Calu3 (cell line): ENCODE measurements at regions of chrX and their contacts with region 1.

Region 1: DNA sequence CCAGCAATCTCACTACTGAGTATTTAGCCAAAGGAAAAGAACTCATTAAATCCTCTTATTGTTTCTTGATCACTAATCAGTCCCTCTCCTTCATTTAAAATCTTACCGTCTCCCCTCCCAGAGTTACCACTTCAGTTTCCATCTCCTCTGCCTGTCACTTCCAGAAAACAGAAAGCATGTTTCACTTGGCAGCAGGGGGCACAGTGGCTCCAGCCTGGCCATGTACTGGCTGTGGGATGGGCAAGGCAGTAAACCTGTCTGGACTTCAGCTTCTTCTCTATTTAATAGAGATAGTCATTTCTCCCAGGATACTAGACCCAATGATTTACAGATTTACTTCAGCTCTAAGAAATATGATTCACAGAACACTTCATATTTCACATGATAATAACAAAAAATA is 63.2 kb downstream of the CD40LG start:
- DNase-seq: peak; percentile 45
- H3K4me3 Mint-ChIP-seq: no peak overlapping the region
- H3K27ac Mint-ChIP-seq: no peak overlapping the region
- H3K4me1 Mint-ChIP-seq: no peaks in the 10 kb centered on the region
- H3K27me3 Mint-ChIP-seq: peaks cover 1% of the 10 kb centered on the region
- CTCF ChIP-seq: no peak

Region 2: DNA sequence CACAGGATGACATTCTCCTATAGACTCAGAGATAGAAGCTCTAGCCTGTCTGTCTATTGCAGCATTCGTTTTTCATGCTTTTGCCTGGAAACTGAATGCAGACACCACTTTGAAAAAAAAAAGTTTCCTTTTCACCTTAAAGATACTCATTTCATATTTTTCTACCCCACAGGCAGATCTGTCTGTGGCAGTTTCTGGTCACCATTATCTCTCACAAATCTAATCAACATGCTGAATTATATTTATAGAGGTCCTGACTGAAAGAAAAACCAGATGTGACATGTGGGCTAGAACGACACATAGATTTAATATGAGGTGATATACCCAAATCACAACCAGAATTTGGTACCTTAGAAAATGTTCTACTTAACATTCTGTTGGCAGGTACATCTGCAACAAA is 382.2 kb before region 1 on chrX:
- CTCF ChIA-PET with region 1: no interaction called
- intact Hi-C with region 1: no loop called
- DNase-seq: no peak
- H3K4me3 Mint-ChIP-seq: no peak overlapping the region
- H3K27ac Mint-ChIP-seq: no peak overlapping the region
- H3K4me1 Mint-ChIP-seq: no peaks in the 10 kb centered on the region
- H3K27me3 Mint-ChIP-seq: no peaks in the 10 kb centered on the region
- CTCF ChIP-seq: no peak

Region 3: GRCh38 chrX:136589961-136590537 is 121.1 kb before region 1 on chrX:
- CTCF ChIA-PET with region 1: no interaction called
- intact Hi-C with region 1: no loop called
- DNase-seq: no peak
- H3K4me3 Mint-ChIP-seq: no peak overlapping the region
- H3K27ac Mint-ChIP-seq: no peak overlapping the region
- H3K4me1 Mint-ChIP-seq: no peaks in the 10 kb centered on the region
- H3K27me3 Mint-ChIP-seq: no peaks in the 10 kb centered on the region
- CTCF ChIP-seq: no peak

Region 4: GRCh38 chrX:136953867-136954787 is 243.0 kb after region 1 on chrX:
- CTCF ChIA-PET with region 1: no interaction called
- intact Hi-C with region 1: no loop called
- DNase-seq: peak; percentile 65
- H3K4me3 Mint-ChIP-seq: no peak overlapping the region
- H3K27ac Mint-ChIP-seq: no peak overlapping the region
- H3K4me1 Mint-ChIP-seq: no peaks in the 10 kb centered on the region
- H3K27me3 Mint-ChIP-seq: no peaks in the 10 kb centered on the region
- CTCF ChIP-seq: peak; percentile 43

Region 5: DNA sequence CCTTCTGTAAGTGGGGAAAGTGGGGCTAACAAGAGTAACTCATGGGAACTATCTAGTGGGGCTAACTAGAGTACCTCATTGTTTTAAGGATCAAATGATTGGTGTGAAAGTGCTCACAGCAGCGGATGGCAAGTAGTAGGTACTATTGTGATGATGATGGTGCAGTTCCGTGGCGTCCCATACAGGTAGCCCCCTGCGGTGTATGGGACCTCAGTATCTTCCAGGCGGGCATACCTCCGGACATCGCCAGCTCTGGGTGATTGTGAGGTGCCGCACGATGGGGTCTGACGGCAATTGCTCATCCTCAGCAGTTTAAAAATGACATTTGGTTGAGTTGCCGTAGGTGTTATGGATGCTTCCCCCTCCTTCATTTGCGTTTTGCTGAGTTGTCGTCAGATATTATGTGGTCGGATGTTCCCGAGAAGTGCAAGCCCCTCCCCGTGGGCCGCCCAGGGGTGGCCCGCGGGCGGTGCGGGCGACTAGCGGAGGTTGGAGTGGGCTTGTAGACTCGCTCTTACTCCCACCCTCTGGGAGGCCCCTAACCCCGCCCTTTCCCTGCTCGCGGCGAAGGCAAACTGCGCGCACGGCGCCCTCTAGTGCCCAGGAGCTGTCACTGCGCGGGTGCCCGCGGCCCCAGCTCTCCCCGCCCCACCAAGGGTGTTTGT is 341.0 kb after region 1 on chrX:
- CTCF ChIA-PET with region 1: no interaction called
- intact Hi-C with region 1: loop called (anchors 5 kb)
- DNase-seq: peak; percentile 73
- H3K4me3 Mint-ChIP-seq: peak overlapping the region; percentile 66
- H3K27ac Mint-ChIP-seq: no peak overlapping the region
- H3K4me1 Mint-ChIP-seq: no peaks in the 10 kb centered on the region
- H3K27me3 Mint-ChIP-seq: peaks cover 75% of the 10 kb centered on the region
- CTCF ChIP-seq: peak; percentile 80